B cell (primary cell): ENCODE measurements at regions of chrX and their contacts with region 1.

Region 1: GRCh38 chrX:119468930-119469635 is 839 bp downstream of the SLC25A5 start:
- DNase-seq: peak; percentile 92
- ATAC-seq: peak; percentile 76
- H3K4me3 ChIP-seq: peak overlapping the region; percentile 8 to 88 (median 83)
- H3K4me3 Mint-ChIP-seq: peak overlapping the region; percentile 85
- H3K27ac ChIP-seq: peak overlapping the region; percentile 92 to 95
- H3K27ac Mint-ChIP-seq: peak overlapping the region; percentile 92
- H3K4me1 ChIP-seq: peaks cover 3 to 15% of the 10 kb centered on the region in 2 donors
- H3K4me1 Mint-ChIP-seq: peaks cover 8% of the 10 kb centered on the region
- H3K27me3 ChIP-seq: no peaks in the 10 kb centered on the region
- H3K27me3 Mint-ChIP-seq: no peaks in the 10 kb centered on the region
- CTCF ChIP-seq: peak; percentile 68

Region 2: DNA sequence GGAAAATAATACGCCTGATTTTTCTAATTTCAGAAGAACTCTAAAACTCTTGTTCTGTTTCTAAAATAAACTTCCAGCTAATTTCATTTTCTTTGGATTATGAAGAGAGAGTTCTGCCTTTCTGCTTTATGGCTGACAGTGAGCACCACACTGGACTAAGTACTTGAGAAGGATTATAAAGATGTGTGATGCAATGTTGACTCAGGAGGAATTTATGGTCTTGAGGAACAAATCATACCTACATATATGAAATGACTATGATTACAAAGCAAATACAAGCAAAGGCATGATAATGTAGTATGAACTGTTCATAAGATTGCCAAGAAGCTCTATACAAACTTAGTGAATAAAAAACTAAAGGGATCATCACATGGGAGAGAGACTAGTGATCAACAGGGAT is 13.8 kb before region 1 on chrX:
- CTCF ChIA-PET with region 1: no interaction called
- POLR2A ChIA-PET with region 1: no interaction called
- intact Hi-C with region 1: no loop called
- DNase-seq: no peak
- ATAC-seq: no peak
- H3K4me3 ChIP-seq: no peak overlapping the region
- H3K4me3 Mint-ChIP-seq: no peak overlapping the region
- H3K27ac ChIP-seq: no peak overlapping the region
- H3K27ac Mint-ChIP-seq: no peak overlapping the region
- H3K4me1 ChIP-seq: no peaks in the 10 kb centered on the region
- H3K4me1 Mint-ChIP-seq: no peaks in the 10 kb centered on the region
- H3K27me3 ChIP-seq: no peaks in the 10 kb centered on the region
- H3K27me3 Mint-ChIP-seq: no peaks in the 10 kb centered on the region
- CTCF ChIP-seq: no peak

Region 3: DNA sequence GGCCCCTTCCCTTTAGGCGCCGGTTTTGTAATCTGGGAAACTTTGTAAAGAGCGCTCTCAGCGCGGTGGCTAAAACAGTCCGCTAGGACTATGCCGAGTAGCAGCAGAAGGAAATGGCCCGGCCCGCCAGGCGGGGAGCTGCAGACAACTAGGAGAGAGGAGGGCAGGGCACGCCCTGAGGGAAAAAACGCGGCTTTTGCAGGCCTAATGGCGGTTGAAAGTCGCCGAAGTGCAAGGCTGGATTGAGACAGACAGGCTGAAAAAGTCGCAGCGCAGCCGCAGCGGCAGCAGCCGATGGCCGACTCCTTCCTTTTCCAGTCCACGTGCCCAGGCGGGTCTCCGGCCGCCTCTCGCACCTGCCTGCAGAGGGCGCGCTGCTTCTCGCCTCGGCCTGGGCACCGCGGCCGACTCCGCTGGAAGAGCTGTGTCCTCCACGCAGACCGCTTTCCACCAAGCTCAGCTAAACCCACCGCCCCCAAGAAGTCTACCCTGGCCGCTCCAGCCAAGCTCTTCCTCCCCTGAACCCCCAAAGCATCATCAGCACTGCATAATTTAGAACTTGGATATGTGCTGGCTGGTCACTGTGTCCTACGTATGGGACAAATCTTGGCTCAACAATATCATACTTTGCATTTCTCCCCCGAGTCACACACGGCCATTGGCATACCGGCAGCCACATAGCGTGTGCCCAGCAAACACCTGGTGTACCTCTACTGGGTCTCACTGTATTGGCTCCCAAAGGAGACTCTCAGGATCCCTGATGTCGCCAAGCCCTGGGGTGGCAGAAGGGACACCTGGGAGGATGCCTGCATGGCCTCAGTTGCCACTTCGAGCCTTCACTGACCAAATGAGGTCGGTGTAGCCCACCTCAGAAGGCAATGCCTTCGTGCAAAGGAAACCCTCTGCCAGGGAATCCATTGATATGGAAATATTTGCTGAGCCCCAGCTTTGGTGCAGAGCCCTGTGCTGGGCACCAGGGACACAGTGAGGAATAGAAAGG is 13.7 kb after region 1 on chrX:
- CTCF ChIA-PET with region 1: interaction called, 24 read pairs
- POLR2A ChIA-PET with region 1: interaction called, 3 read pairs
- intact Hi-C with region 1: loop called (anchors 2 kb)
- DNase-seq: peak; percentile 77
- ATAC-seq: peak; percentile 92
- H3K4me3 ChIP-seq: peak overlapping the region in 4 of 5 experiments; percentile 48 to 60 (median 55)
- H3K4me3 Mint-ChIP-seq: peak overlapping the region; percentile 88
- H3K27ac ChIP-seq: peak overlapping the region in 1 of 2 donors; percentile 15
- H3K27ac Mint-ChIP-seq: peak overlapping the region; percentile 80
- H3K4me1 ChIP-seq: peaks cover 5 to 13% of the 10 kb centered on the region in 2 donors
- H3K4me1 Mint-ChIP-seq: peaks cover 7% of the 10 kb centered on the region
- H3K27me3 ChIP-seq: no peaks in the 10 kb centered on the region
- H3K27me3 Mint-ChIP-seq: no peaks in the 10 kb centered on the region
- CTCF ChIP-seq: peak; percentile 69

Region 4: GRCh38 chrX:119606280-119607015 is 137.4 kb after region 1 on chrX and contains the start of gene NKRF:
- CTCF ChIA-PET with region 1: interaction called, 3 read pairs
- POLR2A ChIA-PET with region 1: interaction called, 5 read pairs
- intact Hi-C with region 1: loop called (anchors 5 kb)
- DNase-seq: peak; percentile 94
- ATAC-seq: peak; percentile 77
- H3K4me3 ChIP-seq: peak within 1 kb of the TSS; percentile 54 to 86 (median 71)
- H3K4me3 Mint-ChIP-seq: peak within 1 kb of the TSS; percentile 97
- H3K27ac ChIP-seq: peak within 1 kb of the TSS; percentile 87 to 94
- H3K27ac Mint-ChIP-seq: peak within 1 kb of the TSS; percentile 99
- H3K4me1 ChIP-seq: peaks cover 12 to 29% of the 10 kb centered on the region in 2 donors
- H3K4me1 Mint-ChIP-seq: peaks cover 42% of the 10 kb centered on the region
- H3K27me3 ChIP-seq: no peaks in the 10 kb centered on the region
- H3K27me3 Mint-ChIP-seq: no peaks in the 10 kb centered on the region
- CTCF ChIP-seq: no peak
- total RNA-seq, gene NKRF: 16.1 and 16.2 TPM in 2 replicates

Region 5: GRCh38 chrX:119871599-119872395 is 402.7 kb after region 1 on chrX and contains the starts of genes NDUFA1 and RNF113A:
- CTCF ChIA-PET with region 1: no interaction called
- POLR2A ChIA-PET with region 1: interaction called, 13 read pairs
- intact Hi-C with region 1: loop called (anchors 5 kb)
- DNase-seq: peak; percentile 90
- ATAC-seq: peak; percentile 88
- H3K4me3 ChIP-seq: peak within 1 kb of the TSS; percentile 64 to 87 (median 79)
- H3K4me3 Mint-ChIP-seq: peak within 1 kb of the TSS; percentile 98
- H3K27ac ChIP-seq: peak within 1 kb of the TSS; percentile 91 to 94
- H3K27ac Mint-ChIP-seq: peak within 1 kb of the TSS; percentile 100
- H3K4me1 ChIP-seq: peaks cover 7 to 16% of the 10 kb centered on the region in 2 donors
- H3K4me1 Mint-ChIP-seq: peaks cover 22% of the 10 kb centered on the region
- H3K27me3 ChIP-seq: no peaks in the 10 kb centered on the region
- H3K27me3 Mint-ChIP-seq: no peaks in the 10 kb centered on the region
- CTCF ChIP-seq: no peak
- total RNA-seq, gene NDUFA1: 32.8 and 39.5 TPM in 2 replicates
- total RNA-seq, gene RNF113A: 32.1 and 37.2 TPM in 2 replicates